ENCODE measurements at regions of chr9 and their contacts with region 1.

Region 1: DNA sequence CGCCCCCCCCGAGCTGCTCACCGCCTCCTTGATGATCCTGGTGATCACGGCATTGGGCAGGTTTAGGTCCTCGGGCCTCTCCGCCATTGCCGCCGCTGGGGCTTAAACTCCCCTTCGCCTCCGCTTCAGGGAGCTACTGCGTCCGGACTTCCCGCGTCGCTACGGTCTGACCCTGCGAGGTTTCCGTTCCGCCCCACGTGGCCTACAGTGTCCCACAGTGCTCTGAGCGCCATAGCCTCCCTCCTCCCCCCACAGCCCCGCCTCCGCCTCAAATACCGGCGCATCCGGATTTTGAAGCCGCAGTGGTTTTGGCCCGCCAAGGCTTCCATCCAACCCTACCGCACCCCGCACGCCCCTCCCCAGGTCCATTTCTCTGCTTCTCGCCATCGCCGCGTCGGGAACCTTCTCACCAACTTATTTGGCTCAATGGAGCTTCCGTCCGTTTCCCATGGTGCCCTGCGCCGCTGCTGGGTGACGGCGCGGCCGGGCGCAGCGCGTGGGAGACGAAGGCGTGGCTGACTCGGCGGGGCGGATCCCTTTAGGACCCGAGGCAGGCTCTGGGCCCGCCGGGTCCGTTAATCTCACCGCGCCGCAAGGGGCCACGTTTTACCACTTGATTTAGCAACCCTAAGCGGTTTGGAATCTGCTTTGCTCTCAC is at the starts of genes C9orf43 and POLE3:
- DNase-seq: peak; percentile 92 to 96 (median 96)
- ATAC-seq: peak; percentile 97
- H3K4me3 ChIP-seq: peak within 1 kb of the TSS; percentile 53 to 71
- H3K27ac ChIP-seq: peak within 1 kb of the TSS; percentile 93 to 98 (median 94)
- H3K4me1 ChIP-seq: peaks cover 23% of the 10 kb centered on the region
- H3K27me3 ChIP-seq: no peaks in the 10 kb centered on the region
- CTCF ChIP-seq: peak in 1 of 7 experiments; percentile 15
- POLR2A ChIP-seq: peak; percentile 46 to 85 (median 83)
- total RNA-seq, gene C9orf43: 1.6 TPM in 1 of 2 donors, not detected in the other
- total RNA-seq, gene POLE3: 13.8 to 17.6 TPM

Region 2: DNA sequence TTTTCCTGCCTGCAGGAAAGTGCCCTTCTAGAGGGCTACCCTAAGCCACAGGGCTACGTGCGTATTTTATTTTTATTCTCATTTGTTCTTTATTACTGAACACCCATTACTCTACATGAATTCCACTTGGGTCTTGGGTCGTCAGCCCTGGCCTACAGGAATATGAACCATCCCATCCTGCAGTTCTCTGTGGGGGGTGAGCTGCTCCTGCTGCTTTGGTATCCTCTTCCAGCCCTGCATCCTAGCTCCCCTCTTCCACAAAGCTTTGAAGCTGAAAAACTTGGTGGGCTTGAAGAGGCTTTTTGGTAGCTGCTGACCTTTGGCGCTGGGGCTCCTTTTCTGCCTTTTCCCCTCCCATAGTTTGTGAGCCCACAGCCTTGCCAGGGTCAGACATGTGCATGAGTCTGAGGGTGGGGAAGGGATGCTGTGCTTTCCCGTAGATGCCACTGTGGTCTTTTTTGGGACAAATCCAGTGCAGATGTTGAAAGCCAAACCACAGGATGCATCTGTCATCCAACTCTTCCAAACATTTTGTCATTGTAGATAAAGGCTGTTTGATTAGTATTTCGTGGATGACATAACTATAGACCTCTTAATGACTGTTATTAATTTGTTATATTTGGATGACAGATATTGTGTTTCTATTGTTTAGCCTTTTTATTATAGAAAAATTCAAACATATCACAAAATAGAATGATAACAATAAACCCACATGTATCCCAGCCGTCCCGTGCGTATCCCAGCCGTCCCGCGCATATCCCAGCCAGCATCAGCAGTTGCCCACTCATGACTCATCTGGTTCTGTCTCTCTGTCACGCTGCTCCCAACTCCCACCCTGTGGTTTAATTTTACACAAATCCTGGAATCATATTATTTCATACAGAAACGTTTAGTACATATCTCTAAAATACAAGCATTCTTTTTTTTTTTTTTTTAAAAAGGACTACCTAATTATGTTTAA is 563.5 kb before region 1 on chr9:
- intact Hi-C with region 1: no loop called
- DNase-seq: no peak
- ATAC-seq: no peak
- H3K4me3 ChIP-seq: no peak overlapping the region
- H3K27ac ChIP-seq: no peak overlapping the region
- H3K4me1 ChIP-seq: peaks cover 9% of the 10 kb centered on the region
- H3K27me3 ChIP-seq: no peaks in the 10 kb centered on the region
- CTCF ChIP-seq: no peak
- POLR2A ChIP-seq: no peak

Region 3: DNA sequence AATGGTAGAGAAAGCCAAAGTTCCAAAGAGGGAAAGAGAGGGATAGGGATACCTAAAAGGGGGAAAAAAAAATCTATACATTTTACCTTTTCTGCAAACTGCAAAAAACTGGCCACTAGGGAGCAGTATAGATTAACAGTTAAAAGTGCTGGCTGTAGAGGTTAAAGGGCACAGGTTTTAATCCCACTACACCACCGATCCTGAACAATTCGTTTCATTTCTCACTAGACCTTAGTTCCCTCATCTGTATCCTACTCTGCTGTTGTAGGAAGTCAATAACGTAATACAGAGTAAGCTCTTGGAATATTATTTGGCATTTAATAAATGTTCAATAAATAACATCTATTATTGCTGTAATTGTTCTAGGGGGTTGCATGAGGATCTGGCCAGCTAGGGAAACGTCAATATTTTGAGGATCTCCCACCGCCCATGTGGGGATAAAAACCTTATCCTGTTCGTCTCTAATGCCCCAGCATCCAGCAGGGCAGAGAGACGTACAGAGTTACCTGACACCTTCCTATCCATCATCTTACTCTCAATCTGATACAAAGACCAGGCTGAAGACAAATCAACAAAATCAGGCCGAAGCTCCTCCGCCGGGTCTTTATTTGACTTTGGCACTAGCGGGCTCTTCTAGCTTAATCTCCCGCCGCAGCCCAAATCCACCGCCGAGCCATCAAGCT is 135.7 kb before region 1 on chr9:
- intact Hi-C with region 1: loop called (anchors 5 kb)
- DNase-seq: peak in 1 of 4 donors; percentile 47
- ATAC-seq: peak; percentile 38
- H3K4me3 ChIP-seq: peak overlapping the region; percentile 69 to 86
- H3K27ac ChIP-seq: peak overlapping the region; percentile 89 to 94 (median 90)
- H3K4me1 ChIP-seq: peaks cover 21% of the 10 kb centered on the region
- H3K27me3 ChIP-seq: no peaks in the 10 kb centered on the region
- CTCF ChIP-seq: peak; percentile 53 to 75 (median 67)
- POLR2A ChIP-seq: no peak

Region 4: DNA sequence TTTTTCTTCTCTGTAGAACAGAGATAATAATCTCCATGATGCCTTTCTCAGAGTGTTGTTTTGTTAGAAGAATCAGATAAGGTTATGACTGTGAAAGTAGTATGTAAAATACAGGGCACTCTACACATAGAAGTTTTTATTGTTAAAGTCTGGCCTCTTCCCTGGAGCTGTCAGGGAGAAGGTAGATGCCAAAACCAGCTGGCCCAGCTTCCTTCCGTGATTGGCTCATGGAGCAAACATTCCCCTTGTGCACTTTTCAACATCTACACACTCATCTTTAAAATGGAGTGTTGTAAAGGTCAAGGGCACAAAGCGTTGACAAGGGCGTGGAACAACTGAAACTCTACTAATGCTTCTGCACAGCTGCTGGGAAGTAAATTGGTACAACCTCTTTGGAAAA is 99.8 kb before region 1 on chr9:
- intact Hi-C with region 1: loop called (anchors 5 kb)
- DNase-seq: no peak
- ATAC-seq: no peak
- H3K4me3 ChIP-seq: no peak overlapping the region
- H3K27ac ChIP-seq: no peak overlapping the region
- H3K4me1 ChIP-seq: no peaks in the 10 kb centered on the region
- H3K27me3 ChIP-seq: no peaks in the 10 kb centered on the region
- CTCF ChIP-seq: no peak
- POLR2A ChIP-seq: no peak

Region 5: GRCh38 chr9:113370806-113371325 is 39.5 kb before region 1 on chr9:
- intact Hi-C with region 1: loop called (anchors 5 kb)
- DNase-seq: peak; percentile 48 to 69 (median 62)
- ATAC-seq: no peak
- H3K4me3 ChIP-seq: no peak overlapping the region
- H3K27ac ChIP-seq: peak overlapping the region in 3 of 4 donors; percentile 49 to 99 (median 56)
- H3K4me1 ChIP-seq: peaks cover 72% of the 10 kb centered on the region
- H3K27me3 ChIP-seq: no peaks in the 10 kb centered on the region
- CTCF ChIP-seq: no peak
- POLR2A ChIP-seq: no peak

Measured in body of pancreas (tissue), 4 donors.